Common myeloid progenitor, CD34-positive (primary cell): ENCODE measurements at regions of chr4 and their contacts with region 1.

Region 1: GRCh38 chr4:153127760-153128494 is 76.3 kb upstream of the TRIM2 start:
- DNase-seq: peak; percentile 83 to 91 (median 86)
- H3K4me3 ChIP-seq: peak overlapping the region in 1 of 7 experiments; percentile 24
- H3K27ac ChIP-seq: no peak overlapping the region
- H3K4me1 ChIP-seq: peaks cover 0 to 2% (median 0%) of the 10 kb centered on the region in 4 experiments
- H3K27me3 ChIP-seq: no peaks in the 10 kb centered on the region

Region 2: GRCh38 chr4:152850377-152850776 is 277.6 kb before region 1 on chr4:
- CTCF ChIA-PET with region 1: interaction called, 78 read pairs
- POLR2A ChIA-PET with region 1: no interaction called
- DNase-seq: peak; percentile 80 to 94 (median 91)
- H3K4me3 ChIP-seq: peak overlapping the region in 4 of 7 experiments; percentile 31 to 52 (median 38)
- H3K27ac ChIP-seq: peak overlapping the region in 1 of 2 experiments; percentile 41
- H3K4me1 ChIP-seq: peaks cover 9 to 22% (median 17%) of the 10 kb centered on the region in 4 experiments
- H3K27me3 ChIP-seq: no peaks in the 10 kb centered on the region

Region 3: GRCh38 chr4:153083447-153083947 is 44.4 kb before region 1 on chr4:
- CTCF ChIA-PET with region 1: interaction called, 175 read pairs
- POLR2A ChIA-PET with region 1: interaction called, 3 read pairs
- DNase-seq: peak; percentile 72 to 79 (median 76)
- H3K4me3 ChIP-seq: no peak overlapping the region
- H3K27ac ChIP-seq: no peak overlapping the region
- H3K4me1 ChIP-seq: peaks cover 0 to 46% (median 25%) of the 10 kb centered on the region in 4 experiments
- H3K27me3 ChIP-seq: no peaks in the 10 kb centered on the region

Region 4: DNA sequence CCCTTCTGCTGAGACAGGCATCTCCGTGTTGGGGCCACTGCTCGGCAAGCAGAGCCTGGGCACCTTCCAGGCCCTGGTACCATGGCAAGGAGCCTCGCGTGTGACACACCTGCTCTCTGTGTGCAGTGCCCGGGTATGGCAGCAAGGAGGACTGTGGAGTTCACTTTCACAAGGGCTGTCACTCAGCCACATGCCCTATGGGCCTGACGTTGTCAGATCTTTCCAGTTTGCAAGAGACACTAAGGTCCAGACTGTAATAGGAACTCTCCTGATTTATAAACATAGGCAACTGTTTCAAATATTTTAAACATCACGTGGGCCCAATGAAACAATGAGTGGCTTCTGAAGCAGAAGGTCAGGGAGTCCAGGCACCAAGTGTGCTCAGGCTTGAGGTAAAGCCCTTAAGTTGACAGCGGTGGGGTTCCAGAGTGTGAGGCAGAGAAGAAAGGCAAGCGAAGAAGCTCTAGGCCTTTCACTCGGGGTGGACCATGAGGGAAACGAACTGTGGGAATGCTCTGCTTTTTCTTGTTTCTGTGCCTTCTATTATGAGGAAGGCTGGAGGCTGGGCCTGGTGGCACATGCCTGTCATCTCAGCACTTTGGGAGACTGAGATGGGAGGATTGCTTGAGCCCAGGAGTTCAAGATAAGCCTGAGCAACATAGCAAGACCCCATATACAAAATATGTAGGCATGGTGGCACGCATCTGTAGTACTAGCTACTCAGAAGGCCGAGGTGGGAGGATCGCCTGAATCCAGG is 32.3 kb before region 1 on chr4:
- CTCF ChIA-PET with region 1: interaction called, 43 read pairs
- POLR2A ChIA-PET with region 1: interaction called, 4 read pairs
- DNase-seq: no peak
- H3K4me3 ChIP-seq: no peak overlapping the region
- H3K27ac ChIP-seq: no peak overlapping the region
- H3K4me1 ChIP-seq: no peaks in the 10 kb centered on the region
- H3K27me3 ChIP-seq: no peaks in the 10 kb centered on the region

Region 5: GRCh38 chr4:153142700-153143438 is 14.9 kb after region 1 on chr4:
- CTCF ChIA-PET with region 1: interaction called, 26 read pairs
- POLR2A ChIA-PET with region 1: no interaction called
- DNase-seq: peak; percentile 74 to 88 (median 85)
- H3K4me3 ChIP-seq: peak overlapping the region in 2 of 7 experiments; percentile 35 to 59
- H3K27ac ChIP-seq: no peak overlapping the region
- H3K4me1 ChIP-seq: peaks cover 0 to 42% (median 24%) of the 10 kb centered on the region in 4 experiments
- H3K27me3 ChIP-seq: no peaks in the 10 kb centered on the region

Region 6: DNA sequence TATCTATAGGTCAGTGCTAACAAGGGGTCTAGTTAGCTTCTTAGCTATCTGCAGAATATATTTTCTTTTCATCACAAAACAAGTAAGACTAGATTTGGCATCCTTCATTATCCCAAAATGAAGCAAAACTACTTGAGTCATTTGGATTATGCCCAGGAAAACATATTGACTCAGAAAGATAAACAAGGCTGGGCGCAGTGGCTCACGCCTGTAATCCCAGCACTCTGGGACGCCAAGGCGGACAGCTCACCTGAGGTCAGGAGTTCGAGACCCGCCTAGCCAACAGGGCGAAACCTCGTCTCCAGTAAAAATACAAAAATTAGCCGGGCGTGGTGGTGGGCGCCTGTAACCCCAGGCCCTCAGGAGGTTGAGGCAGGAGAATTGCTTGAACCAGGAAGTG is 198.6 kb after region 1 on chr4:
- CTCF ChIA-PET with region 1: no interaction called
- POLR2A ChIA-PET with region 1: no interaction called
- DNase-seq: no peak
- H3K4me3 ChIP-seq: no peak overlapping the region
- H3K27ac ChIP-seq: no peak overlapping the region
- H3K4me1 ChIP-seq: no peaks in the 10 kb centered on the region
- H3K27me3 ChIP-seq: no peaks in the 10 kb centered on the region